Psoas muscle (tissue), 8 donors: ENCODE measurements at regions of chr6 and their contacts with region 1.

Region 1: GRCh38 chr6:135183532-135184440 is 2.7 kb downstream of the MYB start:
- DNase-seq: peak in 1 of 2 donors; percentile 47
- ATAC-seq: no peak
- H3K4me3 ChIP-seq: peak overlapping the region; percentile 75
- H3K27ac ChIP-seq: no peak overlapping the region
- H3K4me1 ChIP-seq: peaks cover 23% of the 10 kb centered on the region
- H3K27me3 ChIP-seq: peaks cover 0 to 51% (median 16%) of the 10 kb centered on the region in 3 donors
- CTCF ChIP-seq: peak; percentile 27

Region 2: DNA sequence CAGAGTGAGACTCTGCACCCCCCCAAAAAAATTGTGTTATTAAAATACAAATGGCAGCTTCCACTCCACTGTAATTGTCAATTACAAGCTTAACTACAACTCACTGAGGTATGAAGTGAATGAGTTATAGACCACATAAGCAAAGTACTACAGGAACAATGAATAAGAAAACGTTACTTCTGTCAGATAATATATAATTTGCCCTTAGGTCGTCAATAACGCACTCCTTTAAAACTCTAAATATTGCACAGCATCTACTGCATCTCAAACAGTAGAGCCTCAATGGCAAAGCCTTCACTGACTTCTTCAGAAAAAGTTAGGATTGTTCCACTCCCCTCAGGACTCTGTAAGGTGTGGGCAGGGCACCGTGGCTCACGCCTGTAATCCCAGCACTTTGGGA is 127.2 kb before region 1 on chr6:
- intact Hi-C with region 1: loop called in 1 of 2 experiments (anchors 2 kb)
- DNase-seq: no peak
- ATAC-seq: no peak
- H3K4me3 ChIP-seq: no peak overlapping the region
- H3K27ac ChIP-seq: no peak overlapping the region
- H3K4me1 ChIP-seq: peaks cover 25% of the 10 kb centered on the region
- H3K27me3 ChIP-seq: no peaks in the 10 kb centered on the region
- CTCF ChIP-seq: no peak

Region 3: DNA sequence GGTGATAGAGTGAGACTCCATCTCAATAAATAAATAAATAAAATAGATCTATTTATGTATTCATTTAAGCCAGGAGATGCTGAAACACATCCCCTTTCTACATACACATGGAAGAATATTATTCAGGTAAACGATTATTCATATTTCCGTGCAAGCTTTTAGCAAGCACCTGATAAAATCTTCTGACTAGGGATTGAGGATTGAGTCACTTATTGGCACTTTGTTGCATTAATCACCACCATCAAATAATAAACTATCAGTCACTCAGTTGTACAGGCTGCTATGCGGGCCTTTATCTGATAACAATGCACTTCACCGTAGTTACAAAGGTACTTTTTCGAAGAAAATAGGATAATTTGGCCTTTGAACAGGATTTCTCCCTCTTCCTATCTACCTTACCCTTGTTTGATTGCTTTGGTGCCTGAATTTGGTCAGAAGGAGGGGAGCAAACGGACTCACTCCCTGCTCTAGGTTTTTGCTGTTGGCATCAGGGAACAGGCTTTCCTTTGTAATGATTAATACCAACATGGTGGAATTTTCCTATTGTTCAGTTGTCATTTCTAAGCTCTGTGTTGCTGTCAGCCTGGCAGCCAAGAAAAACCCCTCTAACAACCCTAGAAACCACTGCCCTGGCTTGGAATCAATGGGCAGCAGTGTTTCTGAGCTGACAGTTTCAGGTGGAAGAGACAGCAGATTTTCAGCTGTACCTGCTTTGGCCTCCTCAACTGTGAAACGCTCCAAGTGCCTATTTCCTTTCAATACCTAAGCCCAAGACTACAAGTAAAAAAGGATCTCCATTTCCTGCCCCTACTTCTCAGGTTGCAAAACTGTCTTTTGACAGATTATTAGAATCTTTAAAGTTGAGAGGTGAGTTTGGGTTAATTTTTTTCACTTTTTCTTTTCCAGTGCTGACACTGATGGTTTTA is 60.3 kb after region 1 on chr6:
- intact Hi-C with region 1: no loop called
- DNase-seq: no peak
- ATAC-seq: no peak
- H3K4me3 ChIP-seq: no peak overlapping the region
- H3K27ac ChIP-seq: no peak overlapping the region
- H3K4me1 ChIP-seq: no peaks in the 10 kb centered on the region
- H3K27me3 ChIP-seq: no peaks in the 10 kb centered on the region
- CTCF ChIP-seq: no peak

Region 4: DNA sequence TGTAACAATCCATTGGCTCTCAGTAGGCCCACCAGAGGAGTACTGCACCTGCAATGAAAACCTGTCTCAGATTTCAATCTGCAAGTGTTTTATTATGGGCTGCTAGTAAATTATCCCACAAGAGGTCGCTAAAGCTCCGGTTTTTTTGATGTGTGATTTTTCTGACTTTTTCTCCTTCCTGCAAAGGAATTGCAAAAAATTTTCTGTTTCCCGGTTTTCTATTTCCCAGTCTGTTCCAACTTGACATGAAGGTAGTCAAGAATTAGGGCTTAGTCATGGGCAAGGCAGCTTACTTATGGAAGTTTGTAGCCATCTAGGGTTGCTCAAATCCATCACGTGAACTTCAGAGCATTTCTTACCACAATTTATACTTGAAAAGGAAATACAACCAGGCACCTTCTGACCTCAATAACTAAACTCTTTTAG is 352.2 kb after region 1 on chr6:
- intact Hi-C with region 1: no loop called
- DNase-seq: no peak
- ATAC-seq: peak in 2 of 4 donors; percentile 37 to 40
- H3K4me3 ChIP-seq: no peak overlapping the region
- H3K27ac ChIP-seq: no peak overlapping the region
- H3K4me1 ChIP-seq: no peaks in the 10 kb centered on the region
- H3K27me3 ChIP-seq: no peaks in the 10 kb centered on the region
- CTCF ChIP-seq: peak; percentile 68